ENCODE measurements at regions of chr22 and their contacts with region 1.

Region 1: GRCh38 chr22:19962233-19962908 is 20.8 kb upstream of the TXNRD2 start:
- DNase-seq: peak; percentile 81
- H3K4me3 ChIP-seq: peak overlapping the region in 2 of 3 experiments; percentile 7 to 44
- H3K27ac ChIP-seq: peak overlapping the region; percentile 2
- H3K4me1 ChIP-seq: peaks cover 50% of the 10 kb centered on the region
- H3K27me3 ChIP-seq: no peaks in the 10 kb centered on the region
- CTCF ChIP-seq: peak; percentile 60 to 70

Region 2: DNA sequence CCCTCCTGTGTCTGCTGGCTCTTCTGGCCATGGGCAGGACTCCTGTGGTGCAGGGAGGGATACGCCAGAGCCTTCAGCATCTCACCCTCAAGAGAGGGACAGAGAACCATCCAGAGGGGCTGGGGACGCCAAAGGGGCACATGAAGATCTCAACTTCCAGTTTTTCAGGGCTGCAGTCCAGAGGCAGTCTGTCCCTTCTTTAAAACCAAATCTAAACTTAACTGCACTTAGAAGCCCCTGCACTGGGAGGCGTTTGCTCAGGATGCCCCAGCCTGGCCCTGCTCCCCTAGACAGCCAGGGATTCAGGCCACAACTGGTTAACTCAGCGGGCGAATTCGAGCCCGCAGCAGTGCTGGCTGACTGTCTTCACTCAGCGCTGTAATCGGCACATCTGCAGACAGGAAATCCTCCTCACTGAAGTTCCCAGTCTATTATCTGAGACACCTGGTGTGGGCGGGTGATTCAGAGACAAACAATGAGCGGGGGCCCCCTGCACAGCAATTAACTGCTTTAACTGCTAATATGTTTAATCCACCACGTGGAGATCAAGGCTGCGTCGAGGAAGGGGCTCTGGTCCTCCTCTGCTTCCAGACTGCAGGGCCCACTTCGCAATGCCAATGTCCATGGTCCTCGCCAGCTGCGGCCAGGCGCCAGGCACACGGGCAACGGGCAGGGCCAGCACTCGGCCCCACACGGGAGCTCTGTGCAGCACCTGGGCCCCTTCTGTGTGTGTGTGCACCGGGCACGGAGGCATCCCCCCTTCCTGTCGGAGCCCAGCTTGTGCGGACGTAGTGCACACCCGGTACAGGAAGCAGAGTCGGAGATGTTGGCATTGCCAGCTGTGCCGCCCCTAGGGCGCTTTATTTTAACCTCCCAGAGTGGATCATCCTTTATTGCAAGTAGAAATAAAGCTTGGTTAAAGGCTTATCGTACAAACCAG is 70.8 kb before region 1 on chr22:
- CTCF ChIA-PET with region 1: no interaction called
- dilution Hi-C with region 1: loop called (anchors 5 kb)
- in situ Hi-C with region 1: no loop called
- intact Hi-C with region 1: no loop called
- DNase-seq: peak; percentile 85
- H3K4me3 ChIP-seq: peak overlapping the region in 1 of 3 experiments; percentile 23
- H3K27ac ChIP-seq: peak overlapping the region; percentile 18
- H3K4me1 ChIP-seq: peaks cover 51% of the 10 kb centered on the region
- H3K27me3 ChIP-seq: no peaks in the 10 kb centered on the region
- CTCF ChIP-seq: no peak

Region 3: GRCh38 chr22:19948057-19948760 is 14.2 kb before region 1 on chr22:
- CTCF ChIA-PET with region 1: interaction called, 26 read pairs
- dilution Hi-C with region 1: no loop called
- in situ Hi-C with region 1: no loop called
- intact Hi-C with region 1: no loop called
- DNase-seq: no peak
- H3K4me3 ChIP-seq: no peak overlapping the region
- H3K27ac ChIP-seq: no peak overlapping the region
- H3K4me1 ChIP-seq: peaks cover 24% of the 10 kb centered on the region
- H3K27me3 ChIP-seq: no peaks in the 10 kb centered on the region
- CTCF ChIP-seq: no peak

Region 4: GRCh38 chr22:20027966-20028854 is 65.8 kb after region 1 on chr22:
- CTCF ChIA-PET with region 1: no interaction called
- dilution Hi-C with region 1: no loop called
- in situ Hi-C with region 1: no loop called
- intact Hi-C with region 1: loop called (anchors 2 kb)
- DNase-seq: no peak
- H3K4me3 ChIP-seq: no peak overlapping the region
- H3K27ac ChIP-seq: no peak overlapping the region
- H3K4me1 ChIP-seq: peaks cover 6% of the 10 kb centered on the region
- H3K27me3 ChIP-seq: no peaks in the 10 kb centered on the region
- CTCF ChIP-seq: peak; percentile 26 to 49

Region 5: DNA sequence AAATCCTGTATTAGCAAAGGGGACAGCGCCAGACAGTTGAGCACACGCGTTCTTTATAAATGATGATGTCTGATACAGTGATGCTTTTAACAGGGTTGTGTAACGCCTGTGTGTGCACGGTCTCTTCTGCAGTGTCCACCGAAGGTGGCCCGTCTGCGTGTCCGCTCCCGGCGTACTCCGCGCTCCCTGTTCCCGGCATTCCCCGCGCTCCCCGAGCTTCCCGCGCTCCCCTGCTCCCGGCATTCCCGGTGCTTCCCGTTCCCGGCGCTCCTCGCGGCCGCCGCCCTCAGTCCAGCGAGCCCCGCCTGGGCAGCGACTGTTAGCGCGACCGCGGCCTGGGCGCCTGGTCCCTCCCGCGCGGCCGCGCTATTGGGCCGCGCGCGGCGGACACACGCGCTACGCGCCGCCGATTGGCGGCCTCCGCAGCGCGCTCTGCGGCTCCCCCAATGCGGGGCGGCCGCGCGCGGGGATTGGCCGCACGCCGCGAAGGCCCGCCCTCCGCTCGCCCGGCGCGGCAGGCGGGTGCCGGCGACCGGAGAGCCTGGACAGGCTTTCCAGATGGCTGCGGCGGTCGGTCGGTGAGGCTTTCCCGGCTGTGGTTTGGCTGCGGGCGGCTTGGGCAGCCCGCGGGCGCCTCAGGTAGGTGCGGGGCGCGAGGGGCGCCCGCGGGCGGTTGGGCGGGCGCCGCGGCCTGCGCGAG is 117.5 kb after region 1 on chr22 and contains the start of gene DGCR8:
- CTCF ChIA-PET with region 1: no interaction called
- dilution Hi-C with region 1: no loop called
- in situ Hi-C with region 1: no loop called
- intact Hi-C with region 1: loop called (anchors 5 kb)
- DNase-seq: peak; percentile 96
- H3K4me3 ChIP-seq: peak within 1 kb of the TSS; percentile 67 to 73 (median 73)
- H3K27ac ChIP-seq: peak within 1 kb of the TSS; percentile 81
- H3K4me1 ChIP-seq: peaks cover 18% of the 10 kb centered on the region
- H3K27me3 ChIP-seq: no peaks in the 10 kb centered on the region
- CTCF ChIP-seq: no peak
- total RNA-seq, gene DGCR8: 23.0 to 40.4 TPM

Measured in mammary epithelial cell (primary cell).